AG04450 (cell line): ENCODE measurements at regions of chr3 and their contacts with region 1.

Region 1: DNA sequence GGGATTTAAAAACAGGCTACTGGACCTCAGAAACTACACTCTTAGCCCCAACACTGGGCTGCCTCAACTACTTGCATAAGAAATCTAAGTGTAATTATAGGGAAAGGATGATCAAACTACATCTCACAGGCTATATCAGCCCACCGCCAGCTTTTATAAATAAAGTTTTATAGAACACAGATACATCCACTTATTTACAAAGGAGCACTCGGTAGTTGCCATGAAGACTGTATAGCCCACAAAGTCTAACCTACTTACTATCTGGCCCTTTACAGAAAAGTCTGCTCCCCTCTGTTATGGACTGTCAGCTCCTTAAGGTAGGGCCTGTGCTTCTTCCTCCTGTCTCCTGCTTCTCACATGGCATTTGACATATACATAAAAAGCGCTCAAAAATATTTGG is 9.5 kb downstream of the OSBPL10 start:
- DNase-seq: no peak
- H3K4me3 ChIP-seq: no peak overlapping the region
- H3K27ac ChIP-seq: no peak overlapping the region
- H3K27me3 ChIP-seq: no peaks in the 10 kb centered on the region
- CTCF ChIP-seq: no peak

Region 2: GRCh38 chr3:30894538-30895251 is 1076.9 kb before region 1 on chr3 and contains the start of gene GADL1:
- CTCF ChIA-PET with region 1: no interaction called
- POLR2A ChIA-PET with region 1: interaction called, 10 read pairs
- DNase-seq: no peak
- H3K4me3 ChIP-seq: peak within 1 kb of the TSS; percentile 61
- H3K27ac ChIP-seq: no peak within 1 kb of the TSS
- H3K27me3 ChIP-seq: peaks cover 13% of the 10 kb centered on the region
- CTCF ChIP-seq: no peak
- polyA plus RNA-seq, gene GADL1: not detected in 2 replicates

Region 3: GRCh38 chr3:31777092-31777491 is 194.5 kb before region 1 on chr3:
- CTCF ChIA-PET with region 1: no interaction called
- POLR2A ChIA-PET with region 1: no interaction called
- DNase-seq: no peak
- H3K4me3 ChIP-seq: no peak overlapping the region
- H3K27ac ChIP-seq: no peak overlapping the region
- H3K27me3 ChIP-seq: no peaks in the 10 kb centered on the region
- CTCF ChIP-seq: no peak

Region 4: GRCh38 chr3:31946484-31947081 is 25.0 kb before region 1 on chr3:
- CTCF ChIA-PET with region 1: no interaction called
- POLR2A ChIA-PET with region 1: interaction called, 10 read pairs
- DNase-seq: no peak
- H3K4me3 ChIP-seq: no peak overlapping the region
- H3K27ac ChIP-seq: no peak overlapping the region
- H3K27me3 ChIP-seq: no peaks in the 10 kb centered on the region
- CTCF ChIP-seq: no peak